ENCODE measurements at regions of chr12 and their contacts with region 1.

Region 1: DNA sequence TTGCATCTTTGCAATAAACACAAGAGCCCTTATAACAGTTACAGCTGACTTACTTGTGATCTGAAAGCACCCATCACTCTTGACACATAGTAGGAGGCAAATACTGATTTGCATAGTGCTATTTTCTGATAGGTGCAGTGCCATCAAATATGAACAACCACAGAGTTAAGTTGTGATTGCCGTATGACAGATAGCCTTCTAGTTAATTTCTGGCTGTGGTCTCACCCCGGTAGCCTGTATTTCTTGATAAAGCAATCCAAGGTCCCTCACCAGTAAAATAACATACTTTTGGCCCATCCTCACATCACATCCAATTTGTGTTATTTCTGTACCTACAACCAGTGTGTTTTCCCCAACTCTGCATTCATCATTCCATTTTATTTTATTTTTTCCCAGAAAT is 23.3 kb upstream of the STYK1 start:
- DNase-seq: no peak
- H3K4me3 ChIP-seq: no peak overlapping the region
- H3K27ac ChIP-seq: no peak overlapping the region
- H3K4me1 ChIP-seq: no peaks in the 10 kb centered on the region
- H3K27me3 ChIP-seq: no peaks in the 10 kb centered on the region
- CTCF ChIP-seq: no peak
- EP300 ChIP-seq: no peak
- POLR2A ChIP-seq: no peak
- RAD21 ChIP-seq: no peak

Region 2: GRCh38 chr12:10716704-10717315 is 19.7 kb after region 1 on chr12:
- CTCF ChIA-PET with region 1: interaction called, 3 read pairs
- POLR2A ChIA-PET with region 1: interaction called, 15 read pairs
- DNase-seq: no peak
- H3K4me3 ChIP-seq: 0 out of 8 replicates have a peak overlapping the region, but pooled peaks of 1 of the 4 experiments have one; percentile 0
- H3K27ac ChIP-seq: no peak overlapping the region; the same call in 1 of the 2 replicates
- H3K4me1 ChIP-seq: peaks cover 7 to 24% (median 10%) of the 10 kb centered on the region in 4 experiments; a peak in 6 of 7 replicates
- H3K27me3 ChIP-seq: no peaks in the 10 kb centered on the region
- CTCF ChIP-seq: no peak
- EP300 ChIP-seq: no peak
- POLR2A ChIP-seq: no peak
- RAD21 ChIP-seq: no peak

Measured in H1 (cell line).